ENCODE measurements at regions of chr10 and their contacts with region 1.

Region 1: GRCh38 chr10:110206995-110207804 is at the start of gene MXI1:
- DNase-seq: peak; percentile 80 to 92 (median 86)
- ATAC-seq: peak; percentile 48 to 65
- H3K4me3 ChIP-seq: peak within 1 kb of the TSS; percentile 89
- H3K27ac ChIP-seq: peak within 1 kb of the TSS; percentile 95
- H3K4me1 ChIP-seq: peaks cover 4% of the 10 kb centered on the region
- H3K27me3 ChIP-seq: no peaks in the 10 kb centered on the region
- total RNA-seq, gene MXI1: 57.5 to 91.3 (median 62.4) TPM

Region 2: GRCh38 chr10:110241407-110241806 is 34.2 kb after region 1 on chr10:
- intact Hi-C with region 1: no loop called
- DNase-seq: no peak
- ATAC-seq: no peak
- H3K4me3 ChIP-seq: no peak overlapping the region
- H3K27ac ChIP-seq: no peak overlapping the region
- H3K4me1 ChIP-seq: peaks cover 4% of the 10 kb centered on the region
- H3K27me3 ChIP-seq: no peaks in the 10 kb centered on the region

Region 3: DNA sequence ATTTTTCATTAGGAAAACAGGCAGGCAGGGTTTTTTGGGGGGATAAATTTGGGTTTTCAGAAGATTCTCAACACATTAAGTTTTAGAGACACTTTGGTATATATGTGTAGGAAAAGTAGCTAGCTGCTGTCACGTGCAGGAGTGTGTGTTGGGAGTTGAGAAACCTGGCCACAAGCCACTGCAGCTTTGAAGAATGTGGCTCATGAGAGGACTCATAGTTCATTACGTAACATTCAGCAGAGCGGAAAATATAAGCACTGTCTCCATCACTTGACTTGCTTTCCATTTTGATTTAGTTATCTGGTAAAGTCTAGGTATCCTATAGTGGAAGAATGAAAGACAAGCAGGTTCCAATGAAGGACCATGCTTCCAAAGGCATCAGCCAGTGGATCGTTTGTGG is 66.3 kb after region 1 on chr10:
- intact Hi-C with region 1: loop called in 3 of 4 experiments (anchors 5 to 10 kb)
- DNase-seq: peak; percentile 73 to 87 (median 75)
- ATAC-seq: peak; percentile 64 to 66
- H3K4me3 ChIP-seq: no peak overlapping the region
- H3K27ac ChIP-seq: peak overlapping the region; percentile 90
- H3K4me1 ChIP-seq: peaks cover 8% of the 10 kb centered on the region
- H3K27me3 ChIP-seq: no peaks in the 10 kb centered on the region

Region 4: DNA sequence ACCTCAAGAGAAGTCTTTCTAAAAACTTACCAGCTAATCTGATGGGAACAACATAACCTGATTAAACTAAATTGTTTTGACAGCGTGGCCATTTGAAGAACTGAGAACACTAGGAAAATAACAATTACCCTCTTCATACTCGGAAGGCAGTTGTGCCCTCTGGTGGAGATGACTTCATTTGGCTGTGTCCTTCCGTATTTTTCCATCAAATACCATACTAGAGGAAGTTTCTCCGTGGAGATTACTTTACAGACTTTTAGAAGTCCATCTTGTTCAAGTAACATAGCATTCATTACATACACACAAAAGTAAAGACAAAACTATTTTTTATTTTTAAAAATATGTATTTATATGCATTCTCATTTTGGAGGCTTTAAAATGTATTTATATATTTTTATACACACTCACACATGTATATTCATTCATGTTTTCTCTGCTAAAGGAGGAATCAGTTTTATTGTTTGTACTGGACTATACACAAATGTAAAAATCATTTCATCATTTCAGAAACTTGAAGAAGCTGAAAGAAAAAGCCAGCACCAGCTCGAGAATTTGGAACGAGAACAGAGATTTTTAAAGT is 72.3 kb after region 1 on chr10:
- intact Hi-C with region 1: loop called in 3 of 4 experiments (anchors 5 to 10 kb)
- DNase-seq: peak in 2 of 3 donors; percentile 26 to 29
- ATAC-seq: peak; percentile 86 to 87
- H3K4me3 ChIP-seq: no peak overlapping the region
- H3K27ac ChIP-seq: no peak overlapping the region
- H3K4me1 ChIP-seq: peaks cover 1% of the 10 kb centered on the region
- H3K27me3 ChIP-seq: no peaks in the 10 kb centered on the region